Ovary (tissue), 10 donors: ENCODE measurements at regions of chr4 and their contacts with region 1.

Region 1: DNA sequence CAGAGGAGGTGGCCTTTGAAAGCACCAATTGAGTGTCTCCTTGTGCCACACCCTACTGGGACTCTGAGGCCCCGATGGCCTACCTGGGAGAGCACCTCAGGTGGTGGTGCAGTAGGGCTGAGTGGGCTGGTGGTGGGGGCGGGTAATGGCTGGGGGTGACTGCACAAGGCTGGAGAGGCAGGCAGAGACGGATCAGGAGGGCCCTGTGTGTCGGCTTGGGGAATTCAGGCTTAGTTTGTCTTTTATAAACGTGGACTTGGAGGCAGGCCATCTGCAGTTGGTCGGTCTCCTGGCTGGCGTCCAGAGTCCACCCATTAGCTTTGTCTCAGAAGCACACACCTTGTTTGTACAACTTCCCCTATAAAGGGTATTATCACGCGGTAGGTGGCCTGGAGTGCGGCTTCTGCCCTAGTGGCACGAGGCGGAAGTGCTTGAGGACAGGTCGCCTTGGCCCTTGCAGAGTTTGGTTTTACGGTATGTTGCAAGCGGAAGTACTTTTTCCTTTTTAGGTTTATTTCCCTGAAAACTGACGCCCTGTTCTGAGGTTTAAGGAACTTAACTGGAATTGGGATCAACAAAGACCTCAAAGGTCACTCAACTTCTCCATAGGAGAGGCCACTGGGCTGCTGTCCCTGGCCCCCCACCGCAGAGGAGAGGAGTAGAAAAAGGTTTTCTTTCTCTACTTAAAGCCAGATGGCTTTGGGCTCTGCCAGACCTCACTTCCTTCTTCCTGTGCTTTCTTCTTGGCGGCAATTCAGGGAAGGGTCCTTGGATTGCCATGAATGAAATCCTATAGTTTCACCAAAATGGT is 8.0 kb downstream of the TBC1D14 start:
- DNase-seq: peak; percentile 64 to 81 (median 70)
- H3K4me3 ChIP-seq: no peak overlapping the region
- H3K27ac ChIP-seq: peak overlapping the region; percentile 21 to 55
- H3K4me1 ChIP-seq: peaks cover 18% of the 10 kb centered on the region
- H3K27me3 ChIP-seq: no peaks in the 10 kb centered on the region
- CTCF ChIP-seq: peak in 2 of 3 donors; percentile 40 to 44
- EP300 ChIP-seq: peak; percentile 20
- POLR2A ChIP-seq: no peak

Region 2: GRCh38 chr4:6986781-6987587 is 69.3 kb after region 1 on chr4:
- intact Hi-C with region 1: loop called in 1 of 4 experiments (anchors 5 kb)
- DNase-seq: peak; percentile 95 to 97 (median 96)
- H3K4me3 ChIP-seq: peak overlapping the region; percentile 80
- H3K27ac ChIP-seq: peak overlapping the region; percentile 77 to 92
- H3K4me1 ChIP-seq: peaks cover 7% of the 10 kb centered on the region
- H3K27me3 ChIP-seq: no peaks in the 10 kb centered on the region
- CTCF ChIP-seq: peak in 1 of 3 donors; percentile 10
- EP300 ChIP-seq: no peak
- POLR2A ChIP-seq: peak; percentile 83

Region 3: DNA sequence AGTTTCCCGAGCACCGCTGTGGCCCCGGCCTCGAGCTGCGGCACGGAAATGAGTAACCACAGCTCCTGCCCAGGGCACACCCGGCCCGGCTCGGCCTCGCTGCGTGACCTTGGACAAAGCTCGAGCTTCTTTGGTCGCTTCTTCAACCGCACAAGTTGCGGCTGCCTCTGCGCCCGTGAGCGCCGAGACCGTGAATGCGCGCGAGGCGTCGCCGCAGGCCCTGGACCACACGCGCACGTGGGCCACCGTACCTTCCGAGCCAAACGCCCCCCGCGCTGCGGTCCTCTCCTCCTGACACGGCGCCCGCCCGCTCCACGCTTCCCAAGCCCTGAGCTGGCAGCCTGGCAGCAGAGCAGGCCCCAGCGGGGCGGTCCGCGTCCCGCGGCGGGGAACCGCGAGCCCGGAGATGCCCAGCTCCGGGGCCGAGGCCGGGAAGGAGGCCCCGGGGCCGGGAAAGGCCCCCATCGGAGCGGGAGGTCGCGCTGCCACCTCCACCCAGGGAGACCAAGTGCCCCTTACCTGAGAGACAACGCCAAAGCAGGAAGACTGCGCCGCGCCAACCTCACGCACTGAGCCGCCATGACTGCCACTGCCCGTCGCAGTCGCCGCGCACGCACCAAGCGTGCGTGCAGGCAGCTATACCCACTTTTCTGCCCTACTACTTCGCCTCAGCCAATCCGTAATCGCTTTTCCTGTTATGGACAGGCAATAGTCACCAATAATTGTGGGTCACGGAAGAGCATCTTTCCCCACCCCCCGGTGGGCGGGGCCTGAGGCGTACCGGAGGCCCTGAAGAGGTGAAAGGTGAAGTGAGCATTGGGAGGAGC is 150.0 kb after region 1 on chr4 and contains the start of gene GRPEL1:
- intact Hi-C with region 1: loop called in 1 of 4 experiments (anchors 10 kb)
- DNase-seq: peak; percentile 99 to 100 (median 100)
- H3K4me3 ChIP-seq: peak within 1 kb of the TSS; percentile 78
- H3K27ac ChIP-seq: peak within 1 kb of the TSS; percentile 38 to 84
- H3K4me1 ChIP-seq: peaks cover 9% of the 10 kb centered on the region
- H3K27me3 ChIP-seq: no peaks in the 10 kb centered on the region
- CTCF ChIP-seq: peak in 1 of 3 donors; percentile 22
- EP300 ChIP-seq: peak; percentile 16
- POLR2A ChIP-seq: peak; percentile 88
- total RNA-seq, gene GRPEL1: 11.1 to 37.0 (median 23.3) TPM

Region 4: GRCh38 chr4:7124689-7125442 is 207.2 kb after region 1 on chr4:
- intact Hi-C with region 1: no loop called
- DNase-seq: peak; percentile 76 to 81 (median 77)
- H3K4me3 ChIP-seq: no peak overlapping the region
- H3K27ac ChIP-seq: peak overlapping the region in 1 of 2 donors; percentile 61
- H3K4me1 ChIP-seq: peaks cover 2% of the 10 kb centered on the region
- H3K27me3 ChIP-seq: no peaks in the 10 kb centered on the region
- CTCF ChIP-seq: no peak
- EP300 ChIP-seq: no peak
- POLR2A ChIP-seq: no peak